ENCODE measurements at regions of chr3 and their contacts with region 1.

Region 1: GRCh38 chr3:53195602-53196574 is 34.9 kb downstream of the PRKCD start:
- DNase-seq: peak; percentile 81
- ATAC-seq: peak; percentile 62
- H3K4me3 ChIP-seq: no peak overlapping the region
- H3K4me3 Mint-ChIP-seq: peak overlapping the region; percentile 21
- H3K27ac ChIP-seq: no peak overlapping the region
- H3K27ac Mint-ChIP-seq: no peak overlapping the region
- H3K4me1 ChIP-seq: peaks cover 26 to 56% of the 10 kb centered on the region in 2 donors
- H3K4me1 Mint-ChIP-seq: peaks cover 35% of the 10 kb centered on the region
- H3K27me3 ChIP-seq: no peaks in the 10 kb centered on the region
- H3K27me3 Mint-ChIP-seq: no peaks in the 10 kb centered on the region
- CTCF ChIP-seq: peak; percentile 99

Region 2: DNA sequence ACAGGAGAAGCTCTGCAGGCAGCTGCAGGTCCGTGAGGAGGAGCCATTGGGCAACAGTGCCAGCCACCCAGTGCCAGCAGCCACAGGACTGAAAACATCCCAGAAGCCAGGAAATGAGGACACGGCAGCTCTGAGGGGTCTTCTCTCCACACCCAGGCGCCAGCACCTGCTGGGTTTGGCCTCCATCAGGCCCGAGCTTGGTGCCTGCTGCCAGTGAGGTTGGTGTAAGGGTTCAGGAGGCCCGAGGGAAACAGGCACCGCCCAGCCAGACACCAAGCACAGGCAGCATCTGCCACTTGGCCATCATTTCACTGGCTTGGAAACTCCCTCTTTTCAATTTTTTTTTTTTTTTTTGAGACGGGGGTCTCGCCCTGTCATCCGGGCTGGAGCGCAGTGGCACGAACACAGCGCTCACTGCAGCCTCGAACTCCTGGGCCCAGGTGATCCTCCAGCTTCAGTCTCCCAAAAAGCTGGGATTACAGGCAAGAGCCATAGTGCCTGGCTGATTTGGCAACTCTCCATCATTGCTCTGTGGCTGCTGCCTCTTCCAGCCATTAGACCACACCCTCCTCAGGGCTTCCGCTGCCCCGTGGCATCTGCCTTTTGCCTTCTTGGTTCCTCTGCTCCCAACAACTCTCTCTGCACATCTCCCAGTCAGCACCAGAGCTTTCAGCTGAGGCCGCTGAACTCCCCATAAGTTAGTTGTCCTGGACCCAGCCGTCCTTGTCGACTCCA is 402.8 kb before region 1 on chr3:
- CTCF ChIA-PET with region 1: no interaction called
- POLR2A ChIA-PET with region 1: no interaction called
- intact Hi-C with region 1: no loop called
- DNase-seq: no peak
- ATAC-seq: no peak
- H3K4me3 ChIP-seq: no peak overlapping the region
- H3K4me3 Mint-ChIP-seq: no peak overlapping the region
- H3K27ac ChIP-seq: no peak overlapping the region
- H3K27ac Mint-ChIP-seq: no peak overlapping the region
- H3K4me1 ChIP-seq: no peaks in the 10 kb centered on the region
- H3K4me1 Mint-ChIP-seq: no peaks in the 10 kb centered on the region
- H3K27me3 ChIP-seq: no peaks in the 10 kb centered on the region
- H3K27me3 Mint-ChIP-seq: no peaks in the 10 kb centered on the region
- CTCF ChIP-seq: no peak

Region 3: GRCh38 chr3:52851348-52851747 is 344.5 kb before region 1 on chr3:
- CTCF ChIA-PET with region 1: interaction called, 3 read pairs
- POLR2A ChIA-PET with region 1: no interaction called
- intact Hi-C with region 1: loop called (anchors 2 kb)
- DNase-seq: peak; percentile 49
- ATAC-seq: peak; percentile 73
- H3K4me3 ChIP-seq: no peak overlapping the region
- H3K4me3 Mint-ChIP-seq: no peak overlapping the region
- H3K27ac ChIP-seq: no peak overlapping the region
- H3K27ac Mint-ChIP-seq: no peak overlapping the region
- H3K4me1 ChIP-seq: no peaks in the 10 kb centered on the region
- H3K4me1 Mint-ChIP-seq: no peaks in the 10 kb centered on the region
- H3K27me3 ChIP-seq: no peaks in the 10 kb centered on the region
- H3K27me3 Mint-ChIP-seq: no peaks in the 10 kb centered on the region
- CTCF ChIP-seq: peak; percentile 55

Region 4: DNA sequence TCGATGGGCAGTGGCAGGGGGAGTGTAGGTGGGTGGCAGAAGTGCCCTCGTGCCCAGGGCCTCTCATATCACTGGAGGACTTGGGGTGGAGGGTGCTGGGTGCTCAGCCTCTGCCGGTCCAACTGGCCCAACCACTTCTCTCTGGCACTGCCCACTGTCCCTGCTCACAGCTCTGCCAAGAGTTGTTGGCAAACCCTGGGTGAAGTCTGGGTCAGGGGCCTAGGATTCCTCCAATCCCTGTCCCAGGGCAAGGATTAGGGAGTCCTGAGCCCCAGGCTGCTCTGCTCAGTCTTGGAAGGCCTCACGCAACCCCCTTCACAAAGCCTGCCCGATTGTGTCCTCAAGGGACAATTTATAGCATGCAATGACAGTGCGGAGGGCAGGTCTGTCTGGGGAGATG is 40.1 kb before region 1 on chr3:
- CTCF ChIA-PET with region 1: interaction called, 48 read pairs
- POLR2A ChIA-PET with region 1: interaction called, 5 read pairs
- intact Hi-C with region 1: loop called (anchors 1 kb)
- DNase-seq: no peak
- ATAC-seq: no peak
- H3K4me3 ChIP-seq: no peak overlapping the region
- H3K4me3 Mint-ChIP-seq: no peak overlapping the region
- H3K27ac ChIP-seq: no peak overlapping the region
- H3K27ac Mint-ChIP-seq: no peak overlapping the region
- H3K4me1 ChIP-seq: peaks cover 18 to 28% of the 10 kb centered on the region in 2 donors
- H3K4me1 Mint-ChIP-seq: peaks cover 22% of the 10 kb centered on the region
- H3K27me3 ChIP-seq: peaks cover 0 to 31% (median 12%) of the 10 kb centered on the region in 4 experiments
- H3K27me3 Mint-ChIP-seq: peaks cover 13% of the 10 kb centered on the region
- CTCF ChIP-seq: no peak

Region 5: DNA sequence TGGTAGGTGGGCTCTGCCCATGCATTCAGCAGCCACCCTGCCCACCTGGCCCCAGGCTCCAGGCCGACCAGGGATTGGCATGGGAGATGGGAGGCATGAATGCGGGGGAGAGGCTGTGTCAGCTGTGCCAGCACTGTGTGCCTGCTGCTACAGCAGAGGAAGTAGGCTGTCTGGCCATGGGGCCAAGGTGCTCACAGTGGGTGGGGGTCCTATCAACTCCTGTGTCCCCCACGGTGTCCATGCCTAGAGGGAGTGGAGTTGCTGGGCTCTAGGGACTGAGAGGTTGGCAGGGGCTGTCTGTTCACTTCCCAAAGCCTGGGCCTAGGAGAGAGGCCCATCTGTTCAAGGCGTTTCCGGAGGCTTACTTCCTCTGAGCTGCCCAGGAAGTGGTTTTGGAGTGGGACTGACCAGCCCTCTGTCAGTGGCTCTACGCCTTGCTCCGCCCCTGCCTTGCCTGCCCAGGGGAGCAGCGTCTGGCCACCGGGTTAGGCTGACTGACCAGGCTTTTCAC is 29.1 kb before region 1 on chr3:
- CTCF ChIA-PET with region 1: interaction called, 17 read pairs
- POLR2A ChIA-PET with region 1: no interaction called
- intact Hi-C with region 1: no loop called
- DNase-seq: no peak
- ATAC-seq: no peak
- H3K4me3 ChIP-seq: no peak overlapping the region
- H3K4me3 Mint-ChIP-seq: peak overlapping the region; percentile 6
- H3K27ac ChIP-seq: peak overlapping the region; percentile 46 to 59
- H3K27ac Mint-ChIP-seq: peak overlapping the region; percentile 68
- H3K4me1 ChIP-seq: peaks cover 85 to 99% of the 10 kb centered on the region in 2 donors
- H3K4me1 Mint-ChIP-seq: peaks cover 92% of the 10 kb centered on the region
- H3K27me3 ChIP-seq: no peaks in the 10 kb centered on the region
- H3K27me3 Mint-ChIP-seq: no peaks in the 10 kb centered on the region
- CTCF ChIP-seq: no peak

Region 6: DNA sequence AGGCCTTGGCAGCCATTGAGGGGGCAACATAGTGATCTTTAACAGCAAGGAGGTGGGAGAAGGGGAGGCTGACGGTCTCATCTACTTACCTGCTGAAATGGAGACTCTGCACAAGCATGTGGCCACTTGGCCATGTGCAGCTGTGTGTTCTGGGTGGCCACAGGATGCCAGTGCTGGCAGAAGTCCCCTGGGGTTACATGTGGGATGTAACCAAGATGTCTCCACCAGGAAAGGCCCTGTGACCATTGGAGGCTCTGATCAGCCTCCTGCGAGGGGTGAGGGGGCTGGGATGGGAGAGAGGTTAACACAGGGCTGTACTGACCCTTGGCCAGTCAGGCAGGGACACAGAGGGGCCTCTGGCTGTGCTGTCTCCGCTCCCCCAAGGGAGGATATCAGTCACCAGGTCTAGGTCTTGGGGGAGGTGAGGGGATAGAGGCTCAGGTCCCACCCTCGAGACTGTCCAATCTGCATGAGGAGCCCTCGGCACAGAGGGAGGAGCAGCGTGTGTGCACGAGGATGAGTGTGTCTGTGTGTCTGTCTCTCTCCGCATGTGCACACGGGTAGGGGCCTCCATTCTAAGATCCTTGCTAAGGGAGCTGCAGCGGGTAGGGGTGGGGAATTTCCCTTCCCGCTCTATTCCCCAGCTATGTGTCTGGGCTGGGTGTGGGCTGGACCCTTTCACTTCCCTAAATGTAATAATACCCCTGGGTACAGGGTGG is 15.4 kb before region 1 on chr3:
- CTCF ChIA-PET with region 1: interaction called, 30 read pairs
- POLR2A ChIA-PET with region 1: interaction called, 9 read pairs
- intact Hi-C with region 1: loop called (anchors 1 kb)
- DNase-seq: peak; percentile 92
- ATAC-seq: peak; percentile 97
- H3K4me3 ChIP-seq: peak overlapping the region in 4 of 5 experiments; percentile 16 to 57 (median 22)
- H3K4me3 Mint-ChIP-seq: peak overlapping the region; percentile 83
- H3K27ac ChIP-seq: peak overlapping the region in 1 of 2 donors; percentile 63
- H3K27ac Mint-ChIP-seq: peak overlapping the region; percentile 82
- H3K4me1 ChIP-seq: peaks cover 40 to 64% of the 10 kb centered on the region in 2 donors
- H3K4me1 Mint-ChIP-seq: peaks cover 54% of the 10 kb centered on the region
- H3K27me3 ChIP-seq: no peaks in the 10 kb centered on the region
- H3K27me3 Mint-ChIP-seq: no peaks in the 10 kb centered on the region
- CTCF ChIP-seq: no peak